Sigmoid colon (tissue), 7 donors: ENCODE measurements at regions of chr3 and their contacts with region 1.

Region 1: DNA sequence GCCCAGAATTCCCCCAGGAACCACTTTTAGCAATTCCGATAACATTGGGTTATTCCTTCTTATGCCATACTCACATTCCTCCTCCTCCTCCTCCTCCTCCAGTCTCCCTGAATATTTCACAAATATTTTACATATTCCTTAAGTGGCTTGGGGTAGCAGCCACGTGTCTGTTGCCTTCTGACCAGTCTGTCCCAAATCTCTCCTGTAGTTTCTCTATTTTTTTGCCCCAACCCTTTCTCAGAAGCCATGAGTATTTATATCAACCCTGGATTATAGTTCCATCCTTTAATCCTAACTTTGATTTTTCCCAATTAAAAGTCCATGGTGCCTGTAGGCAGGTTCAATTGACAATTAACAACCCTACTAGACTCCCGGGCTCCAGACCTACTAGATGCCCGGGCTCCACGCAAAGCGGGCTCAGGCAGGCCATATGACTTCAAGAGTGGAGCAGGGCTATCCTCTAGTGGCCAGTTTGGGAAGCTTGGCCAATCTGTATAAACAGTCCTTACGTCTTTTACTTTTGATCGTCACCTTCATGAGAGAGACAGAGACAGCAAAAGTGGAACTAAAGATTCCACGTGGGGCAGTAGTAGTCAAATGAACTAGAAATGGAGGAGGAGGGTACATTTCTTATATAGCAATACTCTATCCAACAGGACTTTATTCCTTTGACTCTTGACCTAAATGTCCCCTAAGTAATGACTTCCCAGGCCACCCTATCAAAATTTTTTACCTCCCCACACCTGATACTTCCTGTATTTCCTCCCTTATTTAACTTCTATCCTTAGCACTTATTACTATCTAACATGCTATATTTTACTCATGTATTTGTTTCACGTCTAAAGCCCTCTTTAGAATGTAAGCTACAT is 69.7 kb downstream of the USF3 start:
- DNase-seq: peak; percentile 82
- H3K4me3 ChIP-seq: peak overlapping the region in 2 of 4 donors; percentile 4 to 16
- H3K27ac ChIP-seq: peak overlapping the region in 1 of 4 donors; percentile 4
- H3K4me1 ChIP-seq: peaks cover 0 to 45% (median 24%) of the 10 kb centered on the region in 4 donors
- H3K27me3 ChIP-seq: no peaks in the 10 kb centered on the region
- CTCF ChIP-seq: peak; percentile 84 to 90 (median 88)
- EP300 ChIP-seq: no peak
- POLR2A ChIP-seq: no peak

Region 2: DNA sequence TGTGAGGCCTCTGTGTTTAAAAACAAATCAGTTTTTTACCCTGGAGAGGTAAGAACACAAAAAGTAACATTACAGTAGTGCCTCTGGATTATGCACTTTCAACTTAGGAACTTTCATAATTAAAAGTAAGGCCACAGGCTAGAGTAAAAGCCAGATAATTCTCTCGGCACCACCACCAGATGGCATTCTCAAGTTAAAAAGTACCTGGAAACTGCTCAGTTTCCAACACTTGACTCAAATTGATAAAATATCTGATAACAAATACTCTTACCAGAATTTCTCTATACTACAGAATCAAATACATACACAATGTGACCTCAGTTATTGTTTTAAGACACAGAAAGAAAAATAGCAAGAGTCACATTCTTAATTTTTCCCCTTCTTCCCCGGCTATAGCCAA is 131.7 kb before region 1 on chr3:
- intact Hi-C with region 1: loop called (anchors 5 kb)
- DNase-seq: no peak
- H3K4me3 ChIP-seq: no peak overlapping the region
- H3K27ac ChIP-seq: no peak overlapping the region
- H3K4me1 ChIP-seq: no peaks in the 10 kb centered on the region
- H3K27me3 ChIP-seq: no peaks in the 10 kb centered on the region
- CTCF ChIP-seq: peak in 3 of 4 experiments; percentile 20 to 39 (median 37)
- EP300 ChIP-seq: no peak
- POLR2A ChIP-seq: no peak

Region 3: DNA sequence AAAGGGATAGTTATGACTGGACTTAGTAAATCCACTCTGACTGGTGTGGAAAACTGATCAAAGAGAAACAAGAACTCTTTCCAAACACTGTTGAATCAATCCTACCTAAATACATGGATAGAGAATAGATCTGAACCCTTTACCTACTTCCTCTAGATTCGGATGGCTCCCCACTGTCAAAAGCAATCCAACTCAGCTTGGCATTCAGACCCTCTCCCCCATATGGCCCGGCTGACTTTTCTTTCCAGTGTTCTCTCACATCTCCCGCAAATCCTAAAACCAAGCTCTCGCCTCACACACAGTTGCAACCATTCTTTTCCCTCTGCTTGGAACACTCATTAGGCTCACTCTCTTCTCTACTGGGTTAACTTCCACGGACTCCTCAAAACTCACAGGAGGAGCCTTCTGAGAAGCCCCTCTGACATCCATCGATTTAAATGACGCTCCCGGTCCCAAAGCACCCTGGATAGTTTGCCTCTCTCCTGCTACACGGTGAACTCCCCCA is 112.4 kb before region 1 on chr3:
- intact Hi-C with region 1: loop called (anchors 5 kb)
- DNase-seq: no peak
- H3K4me3 ChIP-seq: peak overlapping the region; percentile 72 to 93 (median 88)
- H3K27ac ChIP-seq: peak overlapping the region; percentile 87 to 95 (median 92)
- H3K4me1 ChIP-seq: peaks cover 0 to 19% (median 16%) of the 10 kb centered on the region in 4 donors
- H3K27me3 ChIP-seq: no peaks in the 10 kb centered on the region
- CTCF ChIP-seq: no peak
- EP300 ChIP-seq: no peak
- POLR2A ChIP-seq: no peak

Region 4: DNA sequence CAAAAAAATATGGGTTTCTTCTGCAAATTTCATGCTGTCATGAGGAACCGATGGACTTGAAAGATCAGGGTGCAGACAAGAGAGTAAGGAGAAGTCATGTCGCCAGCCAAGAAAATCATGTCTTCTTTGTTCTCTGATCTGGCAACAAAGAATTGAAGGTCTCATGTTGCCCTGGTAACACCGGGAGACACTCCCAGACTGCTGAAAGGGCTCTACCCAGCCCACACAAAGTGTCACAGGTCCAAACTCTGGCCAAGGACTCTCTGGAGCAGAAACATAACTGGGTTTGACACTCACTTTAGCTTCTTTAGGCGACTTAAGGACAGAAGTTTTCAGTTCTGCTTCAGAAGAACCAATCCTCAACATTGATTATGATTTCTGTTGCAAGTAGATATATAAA is 51.5 kb before region 1 on chr3:
- intact Hi-C with region 1: loop called (anchors 5 kb)
- DNase-seq: no peak
- H3K4me3 ChIP-seq: no peak overlapping the region
- H3K27ac ChIP-seq: no peak overlapping the region
- H3K4me1 ChIP-seq: no peaks in the 10 kb centered on the region
- H3K27me3 ChIP-seq: no peaks in the 10 kb centered on the region
- CTCF ChIP-seq: no peak
- EP300 ChIP-seq: no peak
- POLR2A ChIP-seq: no peak

Region 5: DNA sequence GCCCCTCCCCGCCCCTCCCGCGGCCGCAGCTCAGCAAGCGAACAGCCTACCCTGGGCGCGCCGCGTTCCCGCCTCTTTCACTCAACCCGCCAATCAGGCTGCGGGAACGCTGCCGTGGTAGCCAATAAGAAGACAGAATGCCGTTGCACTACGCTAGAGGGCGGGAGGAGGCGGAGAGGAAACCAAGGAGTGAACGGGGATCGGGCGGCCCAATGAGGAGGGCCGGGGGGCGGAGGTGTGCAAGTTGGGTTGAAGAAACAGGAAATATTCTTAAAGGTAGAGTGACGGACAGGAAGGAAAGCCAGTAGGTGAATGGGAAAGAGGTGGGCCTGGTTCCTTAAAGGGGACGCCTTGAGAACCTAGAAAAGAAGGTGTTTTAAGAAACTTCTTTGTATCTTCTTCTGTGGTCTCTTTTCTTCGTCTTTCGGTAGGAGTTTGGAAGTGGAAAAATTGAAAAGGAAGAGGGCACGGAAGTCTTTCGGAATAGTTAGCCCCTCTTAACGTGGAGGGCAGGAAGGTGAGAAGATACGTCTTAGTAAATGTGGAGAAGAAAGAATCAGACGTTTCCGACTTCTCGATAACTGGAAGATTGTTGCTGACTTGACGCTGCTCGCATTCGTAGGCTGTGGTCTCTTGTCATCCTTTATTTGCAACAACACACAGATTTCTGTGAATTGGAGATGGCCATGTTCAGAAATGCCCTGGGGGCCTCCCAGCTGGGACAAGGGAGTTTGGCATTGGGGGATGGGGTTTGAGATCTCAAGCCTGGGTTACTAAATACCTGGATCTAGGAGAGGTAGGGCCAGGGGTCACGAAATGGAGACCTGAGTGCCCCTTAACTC is 70.1 kb after region 1 on chr3:
- intact Hi-C with region 1: loop called (anchors 5 kb)
- DNase-seq: peak; percentile 100
- H3K4me3 ChIP-seq: peak overlapping the region; percentile 91 to 100 (median 98)
- H3K27ac ChIP-seq: peak overlapping the region; percentile 99 to 100 (median 100)
- H3K4me1 ChIP-seq: peaks cover 0 to 39% (median 27%) of the 10 kb centered on the region in 4 donors
- H3K27me3 ChIP-seq: no peaks in the 10 kb centered on the region
- CTCF ChIP-seq: no peak
- EP300 ChIP-seq: no peak
- POLR2A ChIP-seq: no peak